B cell (primary cell): ENCODE measurements at regions of chr5 and their contacts with region 1.

Region 1: GRCh38 chr5:42423285-42424165 is at the start of gene GHR:
- DNase-seq: peak; percentile 30
- ATAC-seq: no peak
- H3K4me3 ChIP-seq: peak within 1 kb of the TSS in 4 of 5 experiments; percentile 25 to 44 (median 40)
- H3K4me3 Mint-ChIP-seq: no peak within 1 kb of the TSS
- H3K27ac ChIP-seq: no peak within 1 kb of the TSS
- H3K27ac Mint-ChIP-seq: no peak within 1 kb of the TSS
- H3K4me1 ChIP-seq: peaks cover 13 to 16% of the 10 kb centered on the region in 2 donors
- H3K4me1 Mint-ChIP-seq: no peaks in the 10 kb centered on the region
- H3K27me3 ChIP-seq: peaks cover 0 to 31% (median 6%) of the 10 kb centered on the region in 4 experiments
- H3K27me3 Mint-ChIP-seq: peaks cover 34% of the 10 kb centered on the region
- CTCF ChIP-seq: peak; percentile 25
- total RNA-seq, gene GHR: not detected in 2 replicates

Region 2: DNA sequence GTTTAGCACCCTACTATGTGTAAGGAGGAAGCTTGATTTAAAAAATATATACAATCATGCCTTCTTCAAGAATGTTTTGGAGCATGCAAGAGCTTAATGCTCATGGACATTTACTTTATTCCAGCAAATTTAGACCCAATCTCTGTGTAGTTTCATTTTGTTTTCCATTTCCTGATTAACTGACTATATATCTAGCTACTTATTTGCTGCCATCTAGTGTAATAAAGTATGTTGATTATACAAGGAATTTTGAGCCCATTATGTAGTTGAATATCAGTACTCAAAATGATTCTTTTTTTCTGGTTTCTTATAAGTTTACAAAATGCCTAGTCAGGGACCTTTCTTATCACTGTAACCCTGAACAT is 233.1 kb after region 1 on chr5:
- CTCF ChIA-PET with region 1: interaction called, 10 read pairs
- POLR2A ChIA-PET with region 1: no interaction called
- intact Hi-C with region 1: loop called (anchors 2 kb)
- DNase-seq: peak; percentile 36
- ATAC-seq: peak; percentile 45
- H3K4me3 ChIP-seq: no peak overlapping the region
- H3K4me3 Mint-ChIP-seq: no peak overlapping the region
- H3K27ac ChIP-seq: no peak overlapping the region
- H3K27ac Mint-ChIP-seq: no peak overlapping the region
- H3K4me1 ChIP-seq: peaks cover 2 to 6% of the 10 kb centered on the region in 2 donors
- H3K4me1 Mint-ChIP-seq: peaks cover 5% of the 10 kb centered on the region
- H3K27me3 ChIP-seq: no peaks in the 10 kb centered on the region
- H3K27me3 Mint-ChIP-seq: peaks cover 10% of the 10 kb centered on the region
- CTCF ChIP-seq: peak; percentile 60

Region 3: DNA sequence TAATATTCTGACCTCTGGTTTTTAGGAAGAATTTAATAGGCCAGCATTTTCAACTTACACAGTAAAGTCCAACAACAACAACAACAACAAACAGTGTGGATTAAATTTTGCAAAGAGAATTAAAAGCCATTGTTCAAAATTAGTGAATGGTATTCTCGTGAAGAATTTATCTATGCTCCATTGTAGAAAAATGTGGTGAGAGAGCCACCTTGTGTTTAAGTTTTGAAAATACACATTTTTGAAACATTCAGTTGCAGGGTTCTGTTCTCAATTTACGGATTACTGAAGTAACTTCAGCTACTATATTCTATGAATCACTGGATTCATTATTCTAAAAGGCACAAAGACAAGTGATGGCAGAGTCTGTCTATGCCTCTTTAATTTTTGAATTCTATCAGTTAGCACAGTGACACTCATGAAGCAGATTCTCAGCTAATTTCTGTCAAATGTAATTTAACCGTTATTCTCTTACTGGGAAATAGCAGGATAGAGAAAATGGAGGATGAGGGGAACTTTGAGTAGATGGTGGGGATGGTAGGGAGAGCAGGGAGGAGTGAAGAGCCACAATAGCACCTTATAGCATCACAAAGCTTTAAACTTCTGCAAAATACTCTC is 344.1 kb after region 1 on chr5:
- CTCF ChIA-PET with region 1: interaction called, 3 read pairs
- POLR2A ChIA-PET with region 1: no interaction called
- intact Hi-C with region 1: loop called (anchors 5 kb)
- DNase-seq: peak; percentile 41
- ATAC-seq: no peak
- H3K4me3 ChIP-seq: no peak overlapping the region
- H3K4me3 Mint-ChIP-seq: no peak overlapping the region
- H3K27ac ChIP-seq: no peak overlapping the region
- H3K27ac Mint-ChIP-seq: no peak overlapping the region
- H3K4me1 ChIP-seq: no peaks in the 10 kb centered on the region
- H3K4me1 Mint-ChIP-seq: no peaks in the 10 kb centered on the region
- H3K27me3 ChIP-seq: no peaks in the 10 kb centered on the region
- H3K27me3 Mint-ChIP-seq: peaks cover 15% of the 10 kb centered on the region
- CTCF ChIP-seq: peak; percentile 69